Mammary epithelial cell (primary cell): ENCODE measurements at regions of chr7 and their contacts with region 1.

Region 1: DNA sequence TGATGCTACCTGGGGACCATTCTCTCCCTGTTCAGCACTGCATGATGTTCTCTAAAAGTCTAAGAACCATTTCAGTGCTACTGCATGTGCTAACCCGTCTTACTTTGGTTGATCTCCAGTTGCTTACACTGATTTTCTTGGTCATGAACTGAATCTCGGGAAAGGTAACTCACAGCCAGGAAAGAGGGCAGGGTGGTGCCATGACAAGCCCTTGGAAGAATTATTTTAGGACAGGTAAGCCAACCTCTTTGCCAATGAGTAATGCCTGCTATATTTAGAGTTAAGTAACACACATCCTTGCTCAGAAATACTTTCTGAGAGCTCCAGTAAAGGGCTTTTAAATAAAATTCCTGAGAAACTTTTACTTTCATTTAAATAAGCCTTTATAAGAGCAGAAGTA is 126.7 kb downstream of the ARL4A start:
- DNase-seq: peak; percentile 87
- H3K4me3 ChIP-seq: peak overlapping the region in 1 of 3 experiments; percentile 3
- H3K27ac ChIP-seq: peak overlapping the region; percentile 59
- H3K4me1 ChIP-seq: peaks cover 27% of the 10 kb centered on the region
- H3K27me3 ChIP-seq: no peaks in the 10 kb centered on the region
- CTCF ChIP-seq: no peak

Region 2: DNA sequence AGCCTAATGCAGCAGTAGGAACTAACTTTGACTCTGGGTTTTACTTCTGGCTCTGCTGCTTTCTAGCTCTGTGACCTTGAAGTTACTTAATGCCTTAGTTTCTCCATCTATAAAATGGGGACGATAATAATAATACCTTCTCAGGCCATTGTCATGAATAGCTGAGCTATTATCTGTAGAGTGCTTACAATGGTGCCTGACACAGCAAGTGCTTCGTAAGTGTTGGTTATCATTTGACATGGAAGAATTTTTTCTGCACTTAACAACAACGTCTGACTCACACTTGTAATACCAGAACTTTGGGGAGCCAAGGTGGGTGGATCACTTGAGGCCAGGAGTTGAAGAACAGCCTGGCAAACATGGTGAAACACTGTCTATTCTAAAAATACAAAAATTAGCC is 13.8 kb after region 1 on chr7:
- CTCF ChIA-PET with region 1: no interaction called
- dilution Hi-C with region 1: no loop called
- in situ Hi-C with region 1: no loop called
- intact Hi-C with region 1: no loop called
- DNase-seq: peak; percentile 67
- H3K4me3 ChIP-seq: no peak overlapping the region
- H3K27ac ChIP-seq: no peak overlapping the region
- H3K4me1 ChIP-seq: peaks cover 5% of the 10 kb centered on the region
- H3K27me3 ChIP-seq: no peaks in the 10 kb centered on the region
- CTCF ChIP-seq: no peak

Region 3: DNA sequence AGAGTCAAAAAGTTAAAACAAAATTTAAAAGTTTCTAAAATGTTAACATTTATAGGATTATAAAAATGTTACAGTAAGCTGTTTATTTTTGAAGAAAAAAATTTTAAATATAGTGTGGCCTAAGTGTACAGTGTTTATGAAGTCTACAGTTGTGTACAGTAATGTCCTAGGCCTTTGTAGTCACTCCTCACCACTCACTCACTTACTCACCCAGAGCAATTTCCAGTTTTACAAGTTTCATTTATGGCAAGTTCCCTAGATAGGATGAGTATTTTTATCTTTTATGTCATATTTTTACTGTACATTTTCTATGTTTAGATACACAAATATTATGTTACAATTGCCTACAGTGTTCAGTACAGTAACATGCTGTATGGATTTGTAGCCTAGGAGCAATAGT is 293.2 kb after region 1 on chr7:
- CTCF ChIA-PET with region 1: no interaction called
- dilution Hi-C with region 1: no loop called
- in situ Hi-C with region 1: no loop called
- intact Hi-C with region 1: loop called (anchors 5 kb)
- DNase-seq: peak; percentile 50
- H3K4me3 ChIP-seq: no peak overlapping the region
- H3K27ac ChIP-seq: no peak overlapping the region
- H3K4me1 ChIP-seq: no peaks in the 10 kb centered on the region
- H3K27me3 ChIP-seq: no peaks in the 10 kb centered on the region
- CTCF ChIP-seq: no peak

Region 4: DNA sequence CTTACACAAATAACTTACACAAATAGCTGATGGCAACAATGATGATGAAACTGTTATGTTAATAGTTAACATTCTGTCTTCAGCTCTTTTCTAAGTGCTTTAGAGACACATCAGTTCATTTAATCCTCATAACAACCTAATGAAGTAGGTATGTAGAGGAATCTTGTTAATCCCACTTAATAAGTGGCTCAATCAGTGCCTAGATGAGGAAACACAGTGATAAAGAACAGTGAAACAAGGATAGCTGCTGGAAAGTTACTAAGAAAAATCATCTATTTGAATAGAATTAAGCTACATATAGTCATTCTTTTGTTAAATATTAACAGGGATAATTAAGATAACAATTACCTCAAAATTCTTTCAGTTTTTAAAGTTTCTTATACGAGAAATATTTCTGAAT is 360.9 kb after region 1 on chr7:
- CTCF ChIA-PET with region 1: no interaction called
- dilution Hi-C with region 1: no loop called
- in situ Hi-C with region 1: no loop called
- intact Hi-C with region 1: no loop called
- DNase-seq: no peak
- H3K4me3 ChIP-seq: no peak overlapping the region
- H3K27ac ChIP-seq: no peak overlapping the region
- H3K4me1 ChIP-seq: no peaks in the 10 kb centered on the region
- H3K27me3 ChIP-seq: peaks cover 4% of the 10 kb centered on the region
- CTCF ChIP-seq: no peak